ENCODE measurements at regions of chr12 and their contacts with region 1.

Region 1: DNA sequence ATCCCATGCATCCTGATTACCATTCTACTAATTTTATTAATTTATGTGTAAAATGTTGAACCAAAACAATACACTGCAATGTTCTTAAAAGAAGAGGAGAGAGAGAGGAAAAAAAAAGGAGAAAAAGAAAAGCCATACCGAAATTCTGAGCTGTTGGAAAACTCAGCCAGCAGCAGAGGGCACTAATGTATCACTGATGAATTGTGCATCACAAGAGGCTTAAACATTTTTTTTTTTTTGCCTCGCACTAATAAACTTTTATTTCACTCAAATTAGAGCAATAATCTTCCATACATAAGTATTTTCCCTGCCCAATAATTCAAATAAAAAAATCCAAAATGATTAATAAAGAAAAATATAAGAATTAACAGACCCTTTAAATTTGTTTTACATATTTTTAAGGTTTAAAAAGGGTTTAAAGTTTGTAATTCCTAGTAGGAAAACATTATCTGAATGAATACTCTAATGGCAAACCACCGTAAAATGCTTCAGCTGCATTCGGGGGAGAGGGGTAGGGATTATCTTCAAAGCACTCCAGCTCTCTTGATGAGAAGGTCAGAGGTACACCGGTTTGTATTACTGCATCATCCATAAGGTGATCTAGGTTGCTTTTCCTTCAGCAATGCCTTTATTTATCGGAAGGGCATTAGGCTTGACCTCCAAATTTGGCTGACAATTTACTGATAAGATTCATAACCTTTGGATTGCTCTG is 41.9 kb downstream of the ATP23 start:
- DNase-seq: peak in 2 of 5 donors; percentile 13 to 27
- ATAC-seq: no peak
- H3K4me3 ChIP-seq: no peak overlapping the region
- H3K27ac ChIP-seq: no peak overlapping the region
- H3K4me1 ChIP-seq: peaks cover 0 to 9% (median 4%) of the 10 kb centered on the region in 12 donors
- H3K27me3 ChIP-seq: no peaks in the 10 kb centered on the region
- CTCF ChIP-seq: peak; percentile 45 to 81 (median 72)
- POLR2A ChIP-seq: no peak

Region 2: DNA sequence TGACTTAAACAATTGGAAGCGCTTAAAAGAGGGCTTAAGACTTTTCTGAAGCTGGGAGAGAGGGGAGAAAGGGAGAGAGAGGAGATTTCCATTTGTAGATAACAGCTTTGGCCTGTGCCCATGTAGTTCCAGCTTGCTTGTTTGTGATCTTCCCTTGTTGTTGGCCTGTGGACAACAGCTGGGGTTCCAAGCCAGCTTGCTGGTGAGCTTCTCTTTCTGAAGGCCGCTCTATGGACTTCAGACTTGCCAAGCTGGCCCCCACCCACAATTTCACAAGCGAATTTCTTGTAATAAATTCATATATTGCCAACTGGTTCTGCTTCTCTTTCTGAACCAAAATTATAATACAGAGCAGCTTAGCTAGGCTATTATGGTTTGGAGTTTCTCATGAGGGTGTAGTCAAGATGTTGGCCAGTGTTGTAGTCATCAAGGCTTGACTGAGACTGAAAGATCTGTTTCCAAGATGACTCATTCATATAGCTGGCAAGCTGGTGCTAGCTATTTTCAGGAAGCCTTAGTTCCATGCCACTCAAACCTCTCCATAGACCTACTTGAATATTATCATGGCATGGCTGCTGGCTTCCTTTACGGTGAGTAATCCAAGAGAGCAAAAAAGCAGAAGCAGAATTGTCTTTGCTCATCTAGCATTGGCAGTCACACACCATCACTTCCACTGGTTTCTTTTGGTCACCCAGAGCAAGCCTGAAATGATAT is 47.4 kb after region 1 on chr12:
- intact Hi-C with region 1: no loop called
- DNase-seq: no peak
- ATAC-seq: no peak
- H3K4me3 ChIP-seq: no peak overlapping the region
- H3K27ac ChIP-seq: no peak overlapping the region
- H3K4me1 ChIP-seq: peaks cover 0 to 7% (median 0%) of the 10 kb centered on the region in 12 donors
- H3K27me3 ChIP-seq: no peaks in the 10 kb centered on the region
- CTCF ChIP-seq: no peak
- POLR2A ChIP-seq: no peak

Region 3: GRCh38 chr12:58176296-58176869 is 193.1 kb after region 1 on chr12:
- intact Hi-C with region 1: loop called in 1 of 10 experiments (anchors 10 kb)
- DNase-seq: peak in 3 of 5 donors; percentile 20 to 45 (median 32)
- ATAC-seq: no peak
- H3K4me3 ChIP-seq: no peak overlapping the region
- H3K27ac ChIP-seq: no peak overlapping the region
- H3K4me1 ChIP-seq: peaks cover 0 to 4% (median 0%) of the 10 kb centered on the region in 12 donors
- H3K27me3 ChIP-seq: no peaks in the 10 kb centered on the region
- CTCF ChIP-seq: peak; percentile 18 to 64 (median 44)
- POLR2A ChIP-seq: no peak

Region 4: DNA sequence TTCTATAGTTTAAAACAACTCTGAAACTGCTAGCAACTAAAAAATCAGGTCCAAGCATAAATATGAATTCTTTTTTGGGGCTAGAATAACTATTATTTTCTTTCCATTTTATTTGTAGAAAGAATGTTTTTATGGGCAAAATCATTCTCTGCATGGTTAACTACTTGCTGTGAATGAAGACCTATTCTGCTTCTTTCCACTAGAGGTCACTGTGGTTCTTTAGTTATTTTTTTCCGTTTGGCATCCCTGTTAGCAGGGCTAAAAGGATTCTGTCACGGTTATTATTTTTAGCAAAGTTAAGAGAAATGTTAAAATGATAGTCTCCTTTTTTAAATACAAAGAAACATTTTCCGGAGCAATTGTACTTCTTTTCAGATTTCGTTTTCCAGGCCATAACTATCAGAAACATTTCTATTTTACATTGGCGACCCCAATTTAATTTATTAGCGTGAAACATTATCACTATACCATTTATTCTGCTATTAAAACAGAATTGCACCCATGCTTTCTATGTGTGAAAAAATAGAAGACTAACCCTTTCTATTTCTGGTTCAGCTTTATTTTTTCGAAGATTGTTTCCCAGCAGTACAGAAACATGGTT is 362.8 kb after region 1 on chr12:
- intact Hi-C with region 1: loop called in 6 of 10 experiments (anchors 5 to 10 kb)
- DNase-seq: no peak
- ATAC-seq: peak in 1 of 4 donors; percentile 62
- H3K4me3 ChIP-seq: no peak overlapping the region
- H3K27ac ChIP-seq: no peak overlapping the region
- H3K4me1 ChIP-seq: peaks cover 0 to 5% (median 0%) of the 10 kb centered on the region in 12 donors
- H3K27me3 ChIP-seq: no peaks in the 10 kb centered on the region
- CTCF ChIP-seq: peak; percentile 74 to 91 (median 84)
- POLR2A ChIP-seq: no peak

Region 5: GRCh38 chr12:58479401-58479800 is 496.1 kb after region 1 on chr12:
- intact Hi-C with region 1: no loop called
- DNase-seq: no peak
- ATAC-seq: no peak
- H3K4me3 ChIP-seq: no peak overlapping the region
- H3K27ac ChIP-seq: no peak overlapping the region
- H3K4me1 ChIP-seq: no peaks in the 10 kb centered on the region
- H3K27me3 ChIP-seq: no peaks in the 10 kb centered on the region
- CTCF ChIP-seq: no peak
- POLR2A ChIP-seq: no peak

Region 6: DNA sequence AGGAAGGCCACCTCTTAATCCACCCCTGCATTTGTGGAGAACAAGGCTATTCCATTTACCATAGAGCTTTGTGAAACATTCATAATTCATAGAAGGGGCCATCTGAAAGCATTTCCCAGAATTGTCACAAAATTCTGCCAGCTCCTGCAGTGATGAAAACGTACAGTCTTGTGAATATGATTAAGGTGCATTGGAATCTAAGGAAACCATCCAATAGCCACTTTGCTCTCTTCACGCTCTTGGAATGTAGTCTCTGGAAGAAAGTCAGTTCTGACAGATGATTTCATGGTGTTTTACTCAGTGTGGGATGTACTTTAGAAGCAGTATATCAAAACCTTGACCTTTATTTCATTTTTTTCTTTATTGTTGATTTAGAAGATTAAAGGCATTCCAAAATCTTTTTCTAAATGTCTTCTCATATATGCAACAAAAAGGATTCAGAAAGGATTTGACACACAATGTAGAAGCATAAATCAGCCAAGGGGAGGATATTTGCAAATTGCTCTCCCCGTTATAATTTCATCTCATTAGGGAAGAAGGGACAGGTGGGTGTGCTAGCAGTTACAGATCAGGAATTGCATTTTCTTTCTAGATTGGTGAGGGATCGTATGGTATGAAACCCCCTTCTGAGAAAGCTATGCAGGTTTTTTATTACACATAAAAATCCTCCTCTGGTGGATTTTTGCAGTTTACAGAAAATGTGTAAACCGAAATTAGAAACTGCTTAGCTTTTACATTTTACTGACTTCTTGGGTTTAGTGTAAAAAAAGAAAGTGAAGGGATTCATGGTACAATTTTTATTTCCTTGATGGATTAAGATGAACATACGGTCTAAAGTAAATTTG is 546.8 kb after region 1 on chr12:
- intact Hi-C with region 1: loop called in 1 of 10 experiments (anchors 10 kb)
- DNase-seq: no peak
- ATAC-seq: peak in 1 of 4 donors; percentile 77
- H3K4me3 ChIP-seq: no peak overlapping the region
- H3K27ac ChIP-seq: no peak overlapping the region
- H3K4me1 ChIP-seq: peaks cover 0 to 6% (median 0%) of the 10 kb centered on the region in 12 donors
- H3K27me3 ChIP-seq: no peaks in the 10 kb centered on the region
- CTCF ChIP-seq: no peak
- POLR2A ChIP-seq: no peak

Region 7: DNA sequence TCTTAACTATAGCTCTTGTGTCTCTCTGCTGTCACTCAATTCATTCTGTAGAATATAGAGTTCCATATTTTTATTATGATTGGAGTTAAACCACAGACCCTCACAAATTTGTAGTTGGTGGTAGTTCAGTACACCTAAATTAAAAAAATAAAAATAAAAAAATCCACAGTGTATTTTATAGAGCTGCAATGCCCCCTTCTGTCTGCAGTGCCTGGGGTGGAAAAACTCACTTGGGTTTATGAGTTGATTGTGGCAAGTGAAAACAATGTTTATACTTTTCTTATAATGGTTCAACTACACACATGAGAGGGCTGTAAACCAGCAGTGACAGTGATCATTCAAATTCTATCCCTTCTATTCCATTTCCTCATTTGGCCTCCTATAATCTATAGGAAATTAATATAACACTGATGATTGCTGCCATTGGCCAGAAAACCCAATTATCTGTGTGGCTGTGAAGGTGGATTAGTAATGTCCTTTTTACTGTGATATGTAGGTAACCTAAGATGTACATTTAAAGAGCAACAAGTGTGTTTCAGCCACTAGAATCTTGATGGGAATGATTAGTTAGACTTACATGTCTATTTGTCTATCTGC is 1103.9 kb after region 1 on chr12:
- intact Hi-C with region 1: loop called in 1 of 10 experiments (anchors 5 kb)
- DNase-seq: no peak
- ATAC-seq: no peak
- H3K4me3 ChIP-seq: no peak overlapping the region
- H3K27ac ChIP-seq: no peak overlapping the region
- H3K4me1 ChIP-seq: no peaks in the 10 kb centered on the region
- H3K27me3 ChIP-seq: no peaks in the 10 kb centered on the region
- CTCF ChIP-seq: peak in 9 of 12 donors; percentile 27 to 56 (median 38)
- POLR2A ChIP-seq: no peak

Region 8: DNA sequence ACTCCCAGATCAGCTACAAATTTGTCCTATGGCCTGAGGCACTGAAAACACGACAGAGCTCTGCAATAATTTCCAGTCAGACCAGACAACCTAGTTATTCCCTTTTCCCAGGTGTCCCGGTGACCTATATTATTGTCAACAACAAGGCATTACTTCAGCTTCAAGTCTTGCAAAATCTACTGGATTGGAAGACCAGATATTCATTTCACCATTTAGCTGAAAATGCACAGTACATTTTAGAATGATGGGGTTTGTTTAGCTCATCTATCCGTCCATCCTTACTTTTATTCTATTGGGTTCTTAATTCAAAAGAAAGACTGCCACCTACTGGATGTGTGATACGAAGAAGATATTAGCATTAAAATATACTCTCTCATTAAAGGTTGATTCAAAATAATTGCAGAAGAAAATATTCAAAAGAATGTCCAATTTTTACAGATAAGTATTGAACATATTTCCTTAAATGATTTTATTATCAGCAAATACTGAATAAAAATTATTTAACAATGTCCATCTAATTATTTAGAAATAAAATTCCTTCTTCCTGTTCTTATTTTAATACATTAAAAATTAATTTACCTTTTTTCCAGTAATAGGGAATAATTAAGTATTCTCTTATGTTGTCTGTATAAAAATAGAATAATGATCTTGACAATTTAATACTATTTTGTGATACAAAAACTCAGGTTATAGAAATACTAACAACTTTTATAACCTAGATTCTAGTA is 1181.9 kb after region 1 on chr12:
- intact Hi-C with region 1: loop called in 1 of 10 experiments (anchors 10 kb)
- DNase-seq: no peak
- ATAC-seq: no peak
- H3K4me3 ChIP-seq: no peak overlapping the region
- H3K27ac ChIP-seq: no peak overlapping the region
- H3K4me1 ChIP-seq: no peaks in the 10 kb centered on the region
- H3K27me3 ChIP-seq: no peaks in the 10 kb centered on the region
- CTCF ChIP-seq: peak; percentile 25 to 62 (median 42)
- POLR2A ChIP-seq: no peak